Heart left ventricle (tissue), 16 donors: ENCODE measurements at regions of chr6 and their contacts with region 1.

Region 1: GRCh38 chr6:16332175-16332542 is 93.8 kb downstream of the GMPR start:
- DNase-seq: peak; percentile 68 to 82 (median 81)
- ATAC-seq: peak; percentile 72 to 87 (median 78)
- H3K4me3 ChIP-seq: peak overlapping the region in 1 of 12 donors; percentile 3
- H3K27ac ChIP-seq: peak overlapping the region in 3 of 12 donors; percentile 5 to 41 (median 41)
- H3K4me1 ChIP-seq: peaks cover 11 to 60% (median 34%) of the 10 kb centered on the region in 12 donors
- H3K27me3 ChIP-seq: no peaks in the 10 kb centered on the region
- CTCF ChIP-seq: peak; percentile 87 to 97 (median 92)
- POLR2A ChIP-seq: no peak

Region 2: DNA sequence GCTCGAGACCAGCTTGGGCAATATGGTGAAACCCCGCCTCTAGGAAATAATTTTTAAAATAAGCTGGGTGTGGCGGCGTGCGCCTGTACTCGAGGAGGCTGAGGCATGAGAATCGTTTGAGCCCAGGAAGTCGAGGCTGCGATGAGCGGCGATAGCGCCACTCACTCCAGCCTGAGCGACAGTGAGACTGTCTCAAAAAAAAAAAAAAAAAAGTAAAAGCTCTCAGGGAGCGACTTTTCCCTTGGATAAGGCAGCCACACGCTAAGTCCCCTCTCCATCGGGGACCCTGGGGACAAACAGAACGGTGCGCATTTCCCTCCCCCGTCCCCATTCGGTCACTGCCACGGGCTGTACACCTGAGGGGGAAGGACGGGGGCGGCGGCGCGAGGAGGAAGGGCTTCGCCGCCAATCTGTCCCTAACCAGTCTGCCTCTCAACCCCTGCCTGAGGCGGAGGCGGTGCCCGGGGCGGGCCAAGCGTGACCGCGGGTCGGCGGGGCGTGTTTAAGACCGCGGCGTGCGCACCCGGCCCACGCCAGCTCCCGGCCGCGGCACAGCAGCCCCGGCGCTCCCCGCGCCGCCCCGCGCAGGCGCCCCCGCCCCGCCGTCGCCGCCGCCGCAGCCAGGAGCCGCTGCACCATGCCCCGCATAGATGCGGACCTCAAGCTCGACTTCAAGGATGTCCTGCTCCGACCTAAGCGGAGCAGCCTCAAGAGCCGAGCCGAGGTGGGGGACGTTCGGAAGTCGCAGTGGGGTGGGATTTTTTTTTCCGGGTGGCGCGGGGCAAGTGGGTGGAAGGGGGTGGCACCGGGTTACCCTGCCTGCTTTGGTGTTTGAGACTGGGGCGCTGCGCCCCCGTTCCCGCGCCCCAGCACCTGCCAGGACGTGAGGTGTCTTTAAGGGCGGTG is 93.8 kb before region 1 on chr6 and contains the start of gene GMPR:
- intact Hi-C with region 1: loop called in 4 of 10 experiments (anchors 1 to 10 kb)
- DNase-seq: peak; percentile 82 to 91 (median 88)
- ATAC-seq: peak; percentile 53 to 84 (median 80)
- H3K4me3 ChIP-seq: peak within 1 kb of the TSS; percentile 50 to 88 (median 76)
- H3K27ac ChIP-seq: peak within 1 kb of the TSS; percentile 59 to 92 (median 86)
- H3K4me1 ChIP-seq: peaks cover 0 to 62% (median 28%) of the 10 kb centered on the region in 12 donors
- H3K27me3 ChIP-seq: no peaks in the 10 kb centered on the region
- CTCF ChIP-seq: peak in 4 of 12 donors; percentile 12 to 27 (median 20)
- POLR2A ChIP-seq: peak in 1 of 2 donors; percentile 58
- total RNA-seq, gene GMPR: 67.8 to 160 (median 115) TPM

Region 3: GRCh38 chr6:16494793-16495192 is 162.6 kb after region 1 on chr6:
- intact Hi-C with region 1: loop called in 1 of 10 experiments (anchors 5 kb)
- DNase-seq: no peak
- ATAC-seq: peak in 3 of 4 donors; percentile 39 to 62 (median 57)
- H3K4me3 ChIP-seq: no peak overlapping the region
- H3K27ac ChIP-seq: no peak overlapping the region
- H3K4me1 ChIP-seq: peaks cover 0 to 35% (median 15%) of the 10 kb centered on the region in 12 donors
- H3K27me3 ChIP-seq: no peaks in the 10 kb centered on the region
- CTCF ChIP-seq: no peak
- POLR2A ChIP-seq: peak in 1 of 2 donors; percentile 3

Region 4: DNA sequence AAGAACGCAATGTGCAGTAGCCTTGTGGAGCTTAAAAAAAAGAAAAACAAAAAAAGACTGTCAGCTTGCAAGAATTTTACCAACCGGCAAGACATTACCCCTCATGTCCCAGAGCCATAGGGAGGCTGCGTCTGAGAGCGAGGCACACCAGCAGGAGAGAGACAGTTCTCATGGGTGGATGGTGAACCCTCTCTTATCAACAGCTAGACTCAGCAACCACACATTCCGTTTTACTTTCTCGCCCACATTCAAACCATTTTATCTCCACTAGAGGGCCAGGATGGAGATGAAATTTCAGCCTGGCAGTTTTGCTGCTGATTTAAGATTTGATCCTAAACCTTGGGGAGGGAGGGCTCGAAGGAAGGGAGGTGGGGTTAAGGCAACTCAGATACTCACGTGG is 182.1 kb after region 1 on chr6:
- intact Hi-C with region 1: loop called in 6 of 10 experiments (anchors 5 to 10 kb)
- DNase-seq: no peak
- ATAC-seq: peak; percentile 27 to 57 (median 30)
- H3K4me3 ChIP-seq: no peak overlapping the region
- H3K27ac ChIP-seq: no peak overlapping the region
- H3K4me1 ChIP-seq: peaks cover 0 to 60% (median 35%) of the 10 kb centered on the region in 12 donors
- H3K27me3 ChIP-seq: no peaks in the 10 kb centered on the region
- CTCF ChIP-seq: peak in 11 of 12 donors; percentile 22 to 61 (median 36)
- POLR2A ChIP-seq: no peak

Region 5: GRCh38 chr6:16964553-16965501 is 632.7 kb after region 1 on chr6:
- intact Hi-C with region 1: loop called in 4 of 10 experiments (anchors 5 to 10 kb)
- DNase-seq: peak; percentile 58 to 82 (median 70)
- ATAC-seq: peak; percentile 67 to 93 (median 90)
- H3K4me3 ChIP-seq: peak overlapping the region in 2 of 12 donors; percentile 21 to 22
- H3K27ac ChIP-seq: no peak overlapping the region
- H3K4me1 ChIP-seq: peaks cover 0 to 8% (median 4%) of the 10 kb centered on the region in 12 donors
- H3K27me3 ChIP-seq: peaks cover 0 to 4% (median 0%) of the 10 kb centered on the region in 9 donors
- CTCF ChIP-seq: peak; percentile 72 to 89 (median 84)
- POLR2A ChIP-seq: no peak